Activated B cell treated with CpG ODN at 0.5 μM for 24 hours (primary cell): ENCODE measurements at regions of chr10 and their contacts with region 1.

Region 1: GRCh38 chr10:87991946-87992345 is 128.5 kb downstream of the PTEN start:
- DNase-seq: no peak
- ATAC-seq: no peak
- H3K4me3 Mint-ChIP-seq: no peak overlapping the region
- H3K27ac Mint-ChIP-seq: no peak overlapping the region
- H3K4me1 Mint-ChIP-seq: peaks cover 2% of the 10 kb centered on the region
- H3K27me3 Mint-ChIP-seq: no peaks in the 10 kb centered on the region
- CTCF ChIP-seq: no peak

Region 2: GRCh38 chr10:88032566-88032965 is 40.6 kb after region 1 on chr10:
- CTCF ChIA-PET with region 1: no interaction called
- POLR2A ChIA-PET with region 1: no interaction called
- intact Hi-C with region 1: no loop called
- DNase-seq: no peak
- ATAC-seq: no peak
- H3K4me3 Mint-ChIP-seq: no peak overlapping the region
- H3K27ac Mint-ChIP-seq: no peak overlapping the region
- H3K4me1 Mint-ChIP-seq: peaks cover 15% of the 10 kb centered on the region
- H3K27me3 Mint-ChIP-seq: no peaks in the 10 kb centered on the region
- CTCF ChIP-seq: no peak

Region 3: GRCh38 chr10:88059190-88059589 is 67.2 kb after region 1 on chr10:
- CTCF ChIA-PET with region 1: no interaction called
- POLR2A ChIA-PET with region 1: no interaction called
- intact Hi-C with region 1: loop called (anchors 5 kb)
- DNase-seq: no peak
- ATAC-seq: no peak
- H3K4me3 Mint-ChIP-seq: no peak overlapping the region
- H3K27ac Mint-ChIP-seq: no peak overlapping the region
- H3K4me1 Mint-ChIP-seq: peaks cover 39% of the 10 kb centered on the region
- H3K27me3 Mint-ChIP-seq: no peaks in the 10 kb centered on the region
- CTCF ChIP-seq: no peak